GM10248 (cell line): ENCODE measurements at regions of chr9 and their contacts with region 1.

Region 1: DNA sequence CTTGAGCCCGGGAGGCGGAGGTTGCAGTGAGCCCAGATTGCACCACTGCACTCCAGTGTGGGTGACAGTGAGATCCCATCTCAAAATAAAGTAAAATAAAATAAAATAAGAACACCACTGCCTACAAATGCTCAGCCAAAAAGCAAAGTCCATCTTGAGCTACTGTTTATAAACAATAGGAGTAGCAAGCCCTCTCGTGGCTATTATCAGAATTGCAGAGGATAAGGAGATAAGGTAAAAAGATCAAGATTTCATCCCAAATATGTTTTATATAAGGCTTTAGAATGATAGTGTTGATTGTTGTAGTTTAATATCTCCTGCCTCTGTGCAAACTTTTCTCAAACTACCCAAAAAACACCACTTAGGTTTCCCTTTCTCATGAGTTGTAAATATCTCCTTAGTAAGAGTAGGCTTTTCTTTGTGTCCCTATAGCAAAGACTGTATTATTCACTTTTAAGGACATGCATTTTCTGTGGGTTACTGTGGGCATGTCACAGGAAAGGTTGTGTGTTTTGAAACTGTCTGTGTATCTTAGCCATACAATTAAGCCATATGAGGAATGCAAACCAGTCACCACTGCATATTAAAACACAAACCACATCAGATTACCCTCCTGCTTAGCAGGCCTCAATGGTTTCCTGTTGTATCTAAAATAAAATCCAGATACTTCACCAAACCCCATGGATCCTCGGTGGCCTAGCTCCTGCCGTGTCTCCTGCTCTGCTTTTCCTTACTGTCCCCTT is 31.8 kb upstream of the CKS2 start:
- DNase-seq: peak; percentile 55
- CTCF ChIP-seq: peak; percentile 70

Region 2: GRCh38 chr9:89183146-89183545 is 96.0 kb before region 1 on chr9:
- CTCF ChIA-PET with region 1: interaction called, 11 read pairs
- POLR2A ChIA-PET with region 1: no interaction called
- DNase-seq: no peak
- CTCF ChIP-seq: peak; percentile 17

Region 3: DNA sequence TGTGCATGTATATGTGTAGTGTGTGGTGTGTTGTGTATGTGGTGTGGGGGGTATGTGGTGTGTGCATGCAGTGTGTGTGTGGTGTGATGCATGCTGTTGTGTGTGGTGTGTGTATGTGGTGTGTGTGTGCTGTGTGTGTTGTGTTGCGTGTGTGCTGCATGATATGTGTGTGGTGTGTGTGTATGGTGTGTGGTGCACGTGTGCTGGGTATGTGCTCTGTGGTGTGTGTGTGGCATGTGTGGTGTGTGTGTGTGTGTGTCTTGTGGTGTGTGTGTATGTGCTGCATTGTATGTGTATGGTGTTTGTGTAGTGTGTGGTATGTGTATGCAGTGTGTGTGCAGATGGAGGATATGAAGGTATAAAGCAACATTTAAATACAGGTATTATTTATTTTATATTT is 18.6 kb before region 1 on chr9:
- CTCF ChIA-PET with region 1: interaction called, 10 read pairs
- POLR2A ChIA-PET with region 1: no interaction called
- DNase-seq: no peak
- CTCF ChIP-seq: no peak